Ascending aorta (tissue), 2 donors: ENCODE measurements at regions of chr22 and their contacts with region 1.

Region 1: DNA sequence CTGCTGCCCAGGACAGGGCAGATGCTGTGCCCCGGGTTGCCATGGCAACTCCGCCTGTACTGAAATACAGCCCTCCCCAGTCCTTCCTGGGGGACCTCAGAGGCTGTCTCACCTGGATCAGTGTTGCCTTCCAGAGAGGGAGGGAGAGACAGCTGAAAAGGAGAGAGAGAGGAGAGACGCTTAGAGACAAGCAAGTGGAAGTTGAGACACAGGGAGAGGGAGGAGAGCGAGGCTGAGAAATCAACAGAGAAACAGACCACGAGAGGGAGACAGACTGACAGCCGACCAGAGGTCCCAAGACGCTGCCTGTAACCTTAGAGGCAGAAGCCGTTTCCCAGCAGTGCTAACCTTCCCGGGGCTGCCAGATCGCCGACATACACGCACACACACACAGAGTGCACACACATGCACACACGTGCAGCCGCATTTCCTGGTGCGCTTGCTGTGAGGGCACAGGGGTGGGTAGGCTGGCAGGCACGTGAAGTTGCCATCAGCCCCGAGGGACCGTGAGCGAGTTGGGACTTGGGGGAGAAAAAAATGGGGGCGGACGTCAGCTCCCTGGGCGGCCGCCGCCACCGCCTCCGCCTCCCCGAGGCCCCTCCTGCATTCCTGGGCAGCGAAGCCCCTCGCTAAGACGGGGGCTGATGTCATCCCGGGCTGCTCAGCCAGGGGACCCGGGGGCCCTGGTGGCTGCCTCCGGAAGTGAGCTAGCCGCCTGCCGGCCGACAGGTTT is 88.6 kb upstream of the CRYBB3 start:
- DNase-seq: peak; percentile 51 to 83
- H3K4me3 ChIP-seq: peak overlapping the region; percentile 58 to 64
- H3K27ac ChIP-seq: peak overlapping the region; percentile 90 to 93
- H3K4me1 ChIP-seq: peaks cover 13 to 49% of the 10 kb centered on the region in 2 donors
- H3K27me3 ChIP-seq: no peaks in the 10 kb centered on the region
- CTCF ChIP-seq: peak; percentile 44 to 64 (median 45)

Region 2: DNA sequence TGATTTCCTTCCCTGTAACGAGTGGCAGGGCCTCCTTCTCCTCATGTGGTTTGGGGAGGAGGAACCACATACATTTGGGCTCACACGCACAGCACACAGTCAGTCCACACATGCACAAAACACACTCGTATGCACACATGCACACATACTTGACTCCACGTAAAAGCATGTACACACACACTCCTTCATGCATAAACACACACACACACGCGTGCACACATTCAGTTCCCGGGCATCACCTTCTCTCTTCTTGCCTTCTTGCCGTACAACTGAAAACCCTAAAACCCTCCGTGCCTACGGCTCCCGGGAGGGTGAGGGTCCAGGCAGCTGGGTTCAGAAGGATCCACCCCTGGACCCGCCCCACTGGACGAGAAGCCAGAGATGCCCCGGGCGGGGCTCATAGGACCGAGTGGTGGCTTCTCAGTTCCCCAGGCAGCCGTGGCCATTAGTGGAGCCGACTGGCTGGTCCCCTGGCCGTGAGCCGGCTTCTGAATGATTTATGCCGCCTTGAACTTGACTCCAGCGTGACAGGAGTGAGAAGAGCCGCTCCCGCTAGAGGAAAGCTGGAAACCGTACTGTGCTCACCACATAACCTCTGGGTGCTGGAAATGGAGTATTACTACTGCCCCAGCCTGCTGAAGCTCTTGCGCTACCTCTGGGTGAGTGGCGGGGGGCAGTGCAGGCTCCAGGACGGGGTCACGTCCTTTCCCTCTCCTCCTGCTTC is 41.1 kb before region 1 on chr22:
- intact Hi-C with region 1: loop called (anchors 2 kb)
- DNase-seq: peak in 1 of 2 donors; percentile 81
- H3K4me3 ChIP-seq: peak overlapping the region; percentile 51 to 72
- H3K27ac ChIP-seq: peak overlapping the region; percentile 94 to 96
- H3K4me1 ChIP-seq: peaks cover 23 to 40% of the 10 kb centered on the region in 2 donors
- H3K27me3 ChIP-seq: no peaks in the 10 kb centered on the region
- CTCF ChIP-seq: no peak

Region 3: GRCh38 chr22:25131198-25131887 is 20.3 kb after region 1 on chr22:
- intact Hi-C with region 1: no loop called
- DNase-seq: no peak
- H3K4me3 ChIP-seq: no peak overlapping the region
- H3K27ac ChIP-seq: peak overlapping the region; percentile 31 to 32
- H3K4me1 ChIP-seq: peaks cover 4 to 41% of the 10 kb centered on the region in 2 donors
- H3K27me3 ChIP-seq: no peaks in the 10 kb centered on the region
- CTCF ChIP-seq: no peak

Region 4: GRCh38 chr22:25148149-25148691 is 37.2 kb after region 1 on chr22:
- intact Hi-C with region 1: loop called (anchors 5 kb)
- DNase-seq: no peak
- H3K4me3 ChIP-seq: no peak overlapping the region
- H3K27ac ChIP-seq: peak overlapping the region; percentile 9 to 56
- H3K4me1 ChIP-seq: peaks cover 0 to 9% of the 10 kb centered on the region in 2 donors
- H3K27me3 ChIP-seq: no peaks in the 10 kb centered on the region
- CTCF ChIP-seq: no peak

Region 5: GRCh38 chr22:25172153-25172552 is 61.1 kb after region 1 on chr22:
- intact Hi-C with region 1: loop called (anchors 5 kb)
- DNase-seq: no peak
- H3K4me3 ChIP-seq: no peak overlapping the region
- H3K27ac ChIP-seq: no peak overlapping the region
- H3K4me1 ChIP-seq: no peaks in the 10 kb centered on the region
- H3K27me3 ChIP-seq: no peaks in the 10 kb centered on the region
- CTCF ChIP-seq: peak; percentile 17 to 41 (median 38)